ENCODE measurements at regions of chr5 and their contacts with region 1.

Region 1: DNA sequence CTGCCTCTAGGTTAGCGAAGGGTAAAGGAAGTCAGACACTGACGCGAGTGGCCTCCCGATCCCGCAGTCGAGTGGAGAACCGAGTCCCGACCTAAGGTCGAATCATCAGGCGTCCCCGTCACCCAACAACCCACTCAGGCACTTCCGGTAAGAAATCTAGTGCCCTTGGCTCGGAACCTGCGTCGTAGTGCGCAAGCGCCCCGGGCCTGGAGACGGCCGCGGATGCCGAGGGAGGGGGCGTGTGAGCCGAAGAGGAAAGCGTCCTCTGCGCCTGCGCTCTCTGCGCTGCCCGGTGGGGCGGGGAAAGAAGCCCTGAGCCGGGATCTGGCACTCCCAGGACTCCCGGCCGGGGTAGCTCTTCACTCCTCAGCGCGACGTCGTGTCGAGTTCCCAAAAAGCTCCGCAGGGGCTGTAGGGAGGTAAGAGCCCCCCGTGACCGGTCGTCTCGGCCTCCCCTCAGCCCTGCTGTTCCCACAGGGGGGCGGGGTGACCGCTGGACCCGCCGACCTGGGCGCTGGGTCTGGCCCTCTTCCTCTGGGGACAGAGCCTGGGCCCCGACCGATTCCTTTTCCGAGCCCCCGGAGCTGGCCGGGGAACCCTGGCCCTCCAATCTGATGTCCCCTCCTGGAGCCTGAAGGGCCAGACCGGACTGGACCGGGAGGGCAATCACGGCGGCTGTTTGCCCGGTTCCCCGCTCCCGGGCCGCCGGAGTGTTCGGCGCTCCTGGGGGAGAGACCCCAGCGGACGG is at the start of gene ZFYVE16:
- DNase-seq: peak; percentile 98
- H3K4me3 ChIP-seq: peak within 1 kb of the TSS; percentile 68 to 85 (median 78)
- H3K27ac ChIP-seq: peak within 1 kb of the TSS; percentile 91
- H3K4me1 ChIP-seq: peaks cover 18% of the 10 kb centered on the region
- H3K27me3 ChIP-seq: no peaks in the 10 kb centered on the region
- CTCF ChIP-seq: peak in 1 of 2 donors; percentile 39
- POLR2A ChIP-seq: peak; percentile 92
- total RNA-seq, gene ZFYVE16: 36.8 and 43.1 TPM in 2 replicates

Region 2: GRCh38 chr5:79514391-79515105 is 893.4 kb before region 1 on chr5:
- CTCF ChIA-PET with region 1: no interaction called
- POLR2A ChIA-PET with region 1: no interaction called
- dilution Hi-C with region 1: no loop called
- intact Hi-C with region 1: loop called (anchors 5 kb)
- DNase-seq: peak; percentile 86
- H3K4me3 ChIP-seq: peak overlapping the region; percentile 80 to 89 (median 87)
- H3K27ac ChIP-seq: peak overlapping the region; percentile 68
- H3K4me1 ChIP-seq: peaks cover 23% of the 10 kb centered on the region
- H3K27me3 ChIP-seq: peaks cover 0 to 2% of the 10 kb centered on the region in 2 experiments
- CTCF ChIP-seq: no peak
- POLR2A ChIP-seq: peak; percentile 11

Region 3: DNA sequence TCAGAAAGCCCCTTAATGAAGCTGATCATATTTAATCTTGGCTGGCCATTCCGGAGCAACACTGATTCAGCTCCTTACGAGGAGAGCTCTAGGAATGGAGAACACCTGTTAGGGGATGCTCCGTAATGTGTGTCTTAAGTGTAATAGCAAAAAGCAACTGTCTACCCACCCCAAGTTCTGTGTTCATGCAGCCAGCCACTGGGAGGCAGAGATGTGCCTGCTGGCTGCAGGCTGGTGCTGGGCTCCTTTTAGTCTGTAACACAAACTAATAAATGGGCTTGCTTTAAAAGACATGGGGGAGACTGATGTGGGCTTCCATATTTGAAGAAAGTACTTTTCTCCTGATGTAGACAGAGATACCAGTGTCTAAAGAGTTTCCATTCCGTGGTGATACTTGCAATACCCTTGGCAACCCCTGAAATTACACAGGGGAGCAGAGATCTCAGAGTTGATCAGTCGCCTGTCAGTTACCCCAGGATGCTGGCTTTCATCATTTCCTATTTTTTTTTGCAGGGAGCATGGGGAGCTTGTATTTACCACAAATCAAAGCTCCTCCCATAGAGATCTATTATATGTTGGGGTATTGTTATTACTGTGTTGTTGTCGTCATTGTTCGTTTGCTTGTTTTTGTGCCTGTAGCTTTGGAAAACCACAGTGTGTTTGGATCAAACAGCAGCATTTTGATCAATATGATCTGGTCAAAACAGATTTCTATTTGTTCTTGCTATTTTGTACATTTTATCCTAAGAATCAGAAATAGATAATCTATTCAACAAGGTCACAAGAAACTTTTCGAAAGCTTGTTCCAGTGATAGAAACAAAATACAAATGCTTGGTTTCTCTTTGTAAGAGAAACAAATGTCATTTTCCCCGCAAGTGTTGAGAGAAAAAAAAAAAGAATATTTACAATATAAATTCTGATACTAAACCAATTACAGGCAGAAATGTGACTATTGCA is 482.7 kb before region 1 on chr5:
- CTCF ChIA-PET with region 1: no interaction called
- POLR2A ChIA-PET with region 1: no interaction called
- dilution Hi-C with region 1: no loop called
- intact Hi-C with region 1: no loop called
- DNase-seq: no peak
- H3K4me3 ChIP-seq: no peak overlapping the region
- H3K27ac ChIP-seq: no peak overlapping the region
- H3K4me1 ChIP-seq: no peaks in the 10 kb centered on the region
- H3K27me3 ChIP-seq: peaks cover 0 to 2% of the 10 kb centered on the region in 2 experiments
- CTCF ChIP-seq: no peak
- POLR2A ChIP-seq: no peak

Region 4: DNA sequence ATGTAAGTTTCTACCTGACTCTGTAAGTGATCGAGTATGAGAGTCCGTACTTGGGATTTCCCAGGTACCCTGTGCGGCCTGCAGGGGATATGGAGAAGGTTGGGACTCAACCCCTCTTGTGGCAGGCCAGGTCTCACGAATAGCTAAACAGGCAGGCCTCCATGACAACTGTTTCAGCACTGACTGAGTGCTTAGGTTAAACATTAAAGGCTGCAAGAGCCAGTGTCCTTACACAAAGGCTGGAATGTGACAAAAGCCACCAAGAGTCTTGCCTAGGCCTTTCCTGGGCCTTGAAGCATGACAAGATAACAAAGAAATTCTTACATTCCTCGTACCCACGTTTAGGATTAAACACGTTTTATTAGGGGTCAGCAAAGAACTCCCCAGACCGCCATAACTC is 314.1 kb before region 1 on chr5:
- CTCF ChIA-PET with region 1: no interaction called
- POLR2A ChIA-PET with region 1: no interaction called
- dilution Hi-C with region 1: no loop called
- intact Hi-C with region 1: loop called (anchors 10 kb)
- DNase-seq: no peak
- H3K4me3 ChIP-seq: no peak overlapping the region
- H3K27ac ChIP-seq: no peak overlapping the region
- H3K4me1 ChIP-seq: no peaks in the 10 kb centered on the region
- H3K27me3 ChIP-seq: no peaks in the 10 kb centered on the region
- CTCF ChIP-seq: no peak
- POLR2A ChIP-seq: no peak

Region 5: GRCh38 chr5:80453366-80453765 is 45.5 kb after region 1 on chr5:
- CTCF ChIA-PET with region 1: no interaction called
- POLR2A ChIA-PET with region 1: no interaction called
- dilution Hi-C with region 1: no loop called
- intact Hi-C with region 1: no loop called
- DNase-seq: no peak
- H3K4me3 ChIP-seq: no peak overlapping the region
- H3K27ac ChIP-seq: no peak overlapping the region
- H3K4me1 ChIP-seq: no peaks in the 10 kb centered on the region
- H3K27me3 ChIP-seq: no peaks in the 10 kb centered on the region
- CTCF ChIP-seq: no peak
- POLR2A ChIP-seq: no peak

Region 6: DNA sequence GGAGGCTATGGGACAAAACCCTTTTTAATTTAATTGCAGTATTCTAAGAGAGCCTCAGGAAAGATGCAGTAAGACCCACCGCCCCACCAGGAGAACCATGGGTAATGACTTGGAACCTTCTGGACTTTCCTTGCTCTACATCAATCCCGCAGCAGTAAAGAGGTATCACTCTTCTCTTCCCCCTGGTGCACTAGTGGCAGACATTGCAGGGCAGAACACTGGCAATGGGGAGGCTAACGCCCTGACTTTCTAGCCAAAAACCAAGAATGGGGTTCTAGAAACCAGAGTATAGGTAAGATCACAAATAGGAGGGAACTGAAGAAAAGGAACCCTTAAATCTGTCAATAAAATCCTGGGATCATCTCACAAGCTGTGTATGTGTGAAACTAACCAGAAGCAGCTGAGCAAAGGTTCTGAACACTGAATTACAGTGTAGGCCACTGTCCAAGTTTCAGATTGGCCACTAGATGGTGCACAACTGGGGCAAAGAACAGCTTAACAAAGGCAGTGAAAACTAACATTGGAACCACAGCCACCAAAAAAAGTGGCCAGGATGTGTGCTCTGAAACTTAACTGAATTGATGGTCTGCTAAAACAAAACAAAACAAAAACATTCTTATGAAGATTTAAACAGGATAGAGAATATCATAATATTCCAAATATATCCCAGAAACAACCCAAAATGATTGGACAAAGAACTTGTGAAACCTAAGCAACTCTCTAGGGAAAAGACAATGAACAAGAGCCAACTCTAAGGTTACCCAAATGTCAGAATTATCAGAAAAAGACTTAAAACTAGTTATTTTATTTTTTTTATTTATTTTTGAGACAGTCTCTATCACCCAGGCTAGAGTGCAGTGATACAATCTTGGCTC is 73.3 kb after region 1 on chr5:
- CTCF ChIA-PET with region 1: interaction called, 6 read pairs
- POLR2A ChIA-PET with region 1: interaction called, 4 read pairs
- dilution Hi-C with region 1: no loop called
- intact Hi-C with region 1: loop called (anchors 1 kb)
- DNase-seq: peak; percentile 59
- H3K4me3 ChIP-seq: no peak overlapping the region
- H3K27ac ChIP-seq: no peak overlapping the region
- H3K4me1 ChIP-seq: no peaks in the 10 kb centered on the region
- H3K27me3 ChIP-seq: no peaks in the 10 kb centered on the region
- CTCF ChIP-seq: peak; percentile 81 to 85
- POLR2A ChIP-seq: no peak

Region 7: GRCh38 chr5:80672140-80672736 is 264.3 kb after region 1 on chr5:
- CTCF ChIA-PET with region 1: interaction called, 4 read pairs
- POLR2A ChIA-PET with region 1: no interaction called
- dilution Hi-C with region 1: no loop called
- intact Hi-C with region 1: loop called (anchors 2 kb)
- DNase-seq: peak; percentile 69
- H3K4me3 ChIP-seq: no peak overlapping the region
- H3K27ac ChIP-seq: no peak overlapping the region
- H3K4me1 ChIP-seq: no peaks in the 10 kb centered on the region
- H3K27me3 ChIP-seq: no peaks in the 10 kb centered on the region
- CTCF ChIP-seq: peak; percentile 70
- POLR2A ChIP-seq: no peak